A673 (cell line): ENCODE measurements at regions of chr3 and their contacts with region 1.

Region 1: DNA sequence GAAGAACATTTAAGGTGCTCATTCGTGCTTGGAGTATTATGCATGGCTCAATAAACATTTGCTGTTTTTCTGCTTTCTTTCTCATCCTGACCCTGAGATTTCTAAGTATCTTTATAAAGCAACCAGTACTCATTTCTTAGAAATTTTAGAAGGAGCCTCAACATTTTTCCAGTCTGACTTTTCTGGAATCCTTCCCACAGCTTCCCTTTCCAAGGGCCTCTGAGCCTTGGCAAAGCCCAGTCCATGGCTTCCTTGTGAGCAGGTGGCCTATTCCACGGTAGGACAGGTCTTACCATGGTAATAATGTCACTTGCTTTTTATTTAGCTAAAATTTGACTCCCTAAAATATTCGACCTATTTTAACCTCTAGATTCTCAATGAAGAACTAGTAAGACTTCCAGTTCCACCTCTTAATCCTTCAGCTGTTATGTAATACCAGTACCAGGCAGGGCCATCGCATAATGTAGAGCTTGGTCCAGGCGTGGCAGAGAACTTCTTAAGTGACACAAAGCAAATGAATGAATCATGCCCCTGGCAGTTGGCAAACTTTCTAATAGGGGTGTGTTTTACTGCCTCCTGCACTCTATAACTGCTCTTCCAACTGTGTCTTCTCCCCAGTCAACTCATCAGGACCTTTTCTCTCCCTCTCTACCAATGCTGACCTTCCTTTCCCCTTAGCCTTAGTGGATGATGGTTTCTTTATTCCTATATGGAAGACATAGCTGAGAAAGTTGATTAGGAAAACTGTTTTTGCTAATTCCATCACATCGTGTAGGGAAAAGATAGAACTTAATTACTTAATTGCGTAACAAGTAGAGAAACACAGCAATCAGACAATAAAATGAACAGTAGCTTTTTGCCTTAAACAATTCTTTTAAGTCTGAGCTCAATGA is 894 bp upstream of the TM4SF4 start:
- DNase-seq: peak; percentile 85
- H3K4me3 ChIP-seq: no peak overlapping the region
- H3K27ac ChIP-seq: no peak overlapping the region
- H3K4me1 ChIP-seq: peaks cover 6% of the 10 kb centered on the region
- H3K27me3 ChIP-seq: no peaks in the 10 kb centered on the region
- CTCF ChIP-seq: no peak

Region 2: DNA sequence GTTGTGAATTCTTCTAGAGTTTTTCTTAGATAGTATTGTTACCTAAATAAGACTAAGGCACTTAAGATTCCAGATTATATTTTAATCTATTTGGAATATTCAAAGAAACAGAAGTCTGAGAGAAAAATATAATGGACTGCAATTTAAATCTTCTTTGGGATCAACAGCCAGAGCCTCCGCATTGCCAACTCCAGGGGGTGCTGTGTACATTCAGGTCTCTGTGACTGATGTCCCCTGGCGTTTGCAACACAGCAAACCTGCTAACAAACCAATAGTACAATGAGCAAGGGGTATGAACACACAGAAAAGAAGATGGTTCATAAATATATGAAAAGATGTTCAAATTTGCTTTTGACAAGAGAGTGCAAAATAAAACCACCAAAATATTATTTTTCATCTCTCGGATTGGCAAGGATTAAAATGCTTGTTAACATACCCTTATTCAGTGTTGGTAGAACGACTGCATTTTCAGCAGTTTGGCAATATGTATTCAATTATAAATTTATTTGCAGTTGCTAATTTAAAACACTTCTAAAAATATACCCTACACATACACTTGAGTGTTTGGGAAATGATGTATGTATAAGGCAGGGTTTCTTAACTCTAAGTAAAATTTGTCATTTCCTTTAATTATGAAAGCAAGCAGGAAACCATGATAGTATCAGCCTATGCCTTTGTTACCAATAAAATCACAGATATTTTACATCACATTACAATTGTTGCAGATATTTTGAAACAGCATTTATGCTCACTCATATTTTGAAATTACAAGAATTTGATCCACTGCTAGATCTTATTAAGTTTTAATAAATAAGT is 80.0 kb before region 1 on chr3:
- CTCF ChIA-PET with region 1: no interaction called
- POLR2A ChIA-PET with region 1: no interaction called
- intact Hi-C with region 1: loop called (anchors 5 kb)
- DNase-seq: peak; percentile 82
- H3K4me3 ChIP-seq: no peak overlapping the region
- H3K27ac ChIP-seq: no peak overlapping the region
- H3K4me1 ChIP-seq: peaks cover 5% of the 10 kb centered on the region
- H3K27me3 ChIP-seq: no peaks in the 10 kb centered on the region
- CTCF ChIP-seq: peak; percentile 92